ENCODE measurements at regions of chr7 and their contacts with region 1.

Region 1: DNA sequence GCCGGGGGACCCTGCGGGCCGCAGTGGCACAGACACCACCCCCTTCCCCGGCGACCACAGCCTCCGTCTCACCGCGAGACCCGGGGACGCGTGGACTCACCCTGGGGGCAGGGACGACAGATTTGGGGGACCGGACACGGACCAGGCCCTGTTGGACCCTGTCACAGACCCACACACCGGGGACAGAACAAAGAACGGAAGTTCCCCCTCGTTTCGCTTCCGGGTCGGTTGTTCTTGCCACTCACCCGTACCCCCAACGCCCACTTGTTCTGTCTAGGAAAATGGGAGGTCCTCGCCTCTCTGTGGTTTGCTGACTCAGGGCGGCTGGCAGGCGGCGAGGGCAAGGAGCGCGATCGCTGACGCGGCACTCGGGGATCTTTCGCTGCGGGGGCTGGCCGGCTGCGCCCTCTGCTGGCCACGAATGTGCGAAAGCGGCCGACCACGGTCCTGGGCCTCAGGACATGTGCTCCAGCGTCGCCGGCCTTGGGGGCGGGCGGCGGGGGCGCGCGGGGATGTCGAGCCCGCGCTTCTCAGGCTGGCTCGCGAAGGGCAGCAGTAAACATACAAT is at the start of gene ZNF3:
- DNase-seq: peak; percentile 99
- ATAC-seq: peak; percentile 83
- H3K4me3 Mint-ChIP-seq: peak within 1 kb of the TSS; percentile 87
- H3K27ac Mint-ChIP-seq: peak within 1 kb of the TSS; percentile 87
- H3K4me1 Mint-ChIP-seq: peaks cover 25% of the 10 kb centered on the region
- H3K27me3 Mint-ChIP-seq: no peaks in the 10 kb centered on the region
- total RNA-seq, gene ZNF3: 18.8 to 19.0 TPM

Region 2: DNA sequence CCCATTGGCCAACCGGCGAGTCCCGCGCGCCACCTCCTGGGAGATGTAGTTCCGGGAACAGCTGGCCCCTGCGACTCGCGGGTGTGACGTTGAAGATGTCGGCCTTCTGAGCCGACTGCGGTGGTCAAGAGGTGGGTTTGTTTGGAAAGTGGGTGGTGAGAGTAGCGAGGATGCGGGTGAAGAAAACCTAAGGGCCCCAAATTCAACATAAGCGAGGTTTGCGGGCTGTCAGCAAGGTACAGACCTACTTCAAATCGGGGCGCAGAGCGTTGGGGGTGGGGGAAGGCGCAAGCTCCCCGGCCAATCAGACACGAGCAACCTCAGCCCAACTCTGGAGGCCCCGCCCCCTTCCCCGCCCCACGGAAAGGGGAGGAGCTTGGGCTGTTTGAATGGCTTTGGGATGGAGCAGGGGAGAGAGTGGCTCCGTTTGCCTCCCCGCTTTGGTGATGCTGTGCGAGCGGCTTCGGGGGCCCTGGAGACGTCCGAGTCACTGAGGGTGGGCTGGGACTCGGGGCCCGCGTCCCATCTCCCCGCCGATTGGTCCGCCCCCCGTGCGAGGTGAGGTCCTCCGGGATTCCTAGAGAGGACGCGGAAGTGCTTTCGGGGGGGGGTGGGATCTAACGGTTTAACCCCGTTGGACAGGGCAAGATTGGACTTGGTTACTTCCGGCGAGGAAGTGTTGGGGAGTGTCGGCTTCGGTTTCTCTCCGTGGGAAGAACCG is 576.9 kb before region 1 on chr7 and contains the start of gene ZKSCAN5:
- CTCF ChIA-PET with region 1: no interaction called
- POLR2A ChIA-PET with region 1: no interaction called
- intact Hi-C with region 1: loop called in 1 of 2 experiments (anchors 2 kb)
- DNase-seq: peak; percentile 99
- ATAC-seq: peak; percentile 87
- H3K4me3 Mint-ChIP-seq: peak within 1 kb of the TSS; percentile 87
- H3K27ac Mint-ChIP-seq: peak within 1 kb of the TSS; percentile 97
- H3K4me1 Mint-ChIP-seq: peaks cover 25% of the 10 kb centered on the region
- H3K27me3 Mint-ChIP-seq: no peaks in the 10 kb centered on the region
- total RNA-seq, gene ZKSCAN5: 10.1 to 12.1 TPM

Region 3: GRCh38 chr7:99910976-99911375 is 170.6 kb before region 1 on chr7:
- CTCF ChIA-PET with region 1: interaction called, 3 read pairs
- POLR2A ChIA-PET with region 1: no interaction called
- intact Hi-C with region 1: loop called (anchors 1 to 10 kb)
- DNase-seq: no peak
- ATAC-seq: no peak
- H3K4me3 Mint-ChIP-seq: no peak overlapping the region
- H3K27ac Mint-ChIP-seq: peak overlapping the region; percentile 43
- H3K4me1 Mint-ChIP-seq: peaks cover 30% of the 10 kb centered on the region
- H3K27me3 Mint-ChIP-seq: no peaks in the 10 kb centered on the region

Region 4: DNA sequence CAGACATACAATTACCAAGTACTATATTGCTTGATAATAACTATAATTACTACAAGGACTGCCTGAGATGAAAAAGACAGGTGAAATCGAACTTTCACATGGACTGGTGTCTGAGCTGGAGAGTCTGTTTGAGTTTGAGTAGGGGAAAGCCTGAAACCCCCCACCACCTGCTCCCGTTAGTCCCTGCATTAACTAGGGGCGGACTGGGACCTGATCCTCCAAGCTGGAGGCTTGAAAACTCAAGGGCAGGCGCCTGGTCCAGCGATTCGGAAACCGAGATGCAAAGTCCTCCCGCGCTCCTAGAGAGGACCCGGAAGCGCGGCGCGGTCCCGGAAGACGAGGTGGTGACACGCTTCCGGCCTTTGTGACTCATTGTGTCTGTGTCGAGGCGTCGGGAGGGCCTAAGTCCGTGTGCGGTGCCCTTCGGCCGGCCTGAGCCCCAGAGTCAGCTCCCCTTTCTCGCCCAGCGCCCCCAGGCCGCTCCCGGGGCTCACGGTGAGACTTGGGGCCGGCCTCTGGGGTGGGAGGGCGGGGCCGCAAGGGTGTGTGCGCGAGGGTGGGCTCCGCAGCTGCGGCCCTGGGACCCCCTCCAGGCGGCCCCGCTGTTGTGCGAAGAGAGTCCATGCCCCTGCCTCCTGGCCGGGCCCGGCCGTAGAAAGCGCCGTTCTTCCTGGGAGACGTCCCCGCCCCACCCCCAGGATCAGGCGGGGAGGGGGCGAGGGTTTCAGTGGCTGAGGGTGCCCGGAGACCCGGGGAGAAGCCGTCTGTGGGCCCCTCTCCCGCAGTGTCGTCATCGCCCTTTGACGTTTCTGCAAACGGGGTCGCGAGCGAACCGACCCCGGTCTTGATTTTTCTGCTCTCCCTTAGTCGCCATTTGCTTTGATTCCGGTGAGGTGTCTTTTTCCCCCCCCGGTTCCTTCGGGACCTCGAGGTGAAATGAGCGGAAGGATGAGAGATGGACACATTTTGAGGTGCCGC is 66.1 kb before region 1 on chr7 and contains the start of gene ZKSCAN1:
- CTCF ChIA-PET with region 1: interaction called, 5 read pairs
- POLR2A ChIA-PET with region 1: no interaction called
- intact Hi-C with region 1: loop called (anchors 1 to 5 kb)
- DNase-seq: peak; percentile 92
- ATAC-seq: peak; percentile 87
- H3K4me3 Mint-ChIP-seq: peak within 1 kb of the TSS; percentile 94
- H3K27ac Mint-ChIP-seq: peak within 1 kb of the TSS; percentile 96
- H3K4me1 Mint-ChIP-seq: peaks cover 53% of the 10 kb centered on the region
- H3K27me3 Mint-ChIP-seq: no peaks in the 10 kb centered on the region
- total RNA-seq, gene ZKSCAN1: 45.2 to 62.9 TPM

Region 5: GRCh38 chr7:100119062-100119700 is 37.6 kb after region 1 on chr7 and contains the starts of genes CNPY4 and TAF6:
- CTCF ChIA-PET with region 1: interaction called, 6 read pairs
- POLR2A ChIA-PET with region 1: no interaction called
- intact Hi-C with region 1: loop called in 1 of 2 experiments (anchors 1 kb)
- DNase-seq: peak; percentile 97
- ATAC-seq: peak; percentile 68
- H3K4me3 Mint-ChIP-seq: peak within 1 kb of the TSS; percentile 86
- H3K27ac Mint-ChIP-seq: peak within 1 kb of the TSS; percentile 94
- H3K4me1 Mint-ChIP-seq: peaks cover 19% of the 10 kb centered on the region
- H3K27me3 Mint-ChIP-seq: no peaks in the 10 kb centered on the region
- total RNA-seq, gene CNPY4: 11.0 to 14.0 TPM
- total RNA-seq, gene TAF6: 54.3 to 59.5 TPM

Region 6: DNA sequence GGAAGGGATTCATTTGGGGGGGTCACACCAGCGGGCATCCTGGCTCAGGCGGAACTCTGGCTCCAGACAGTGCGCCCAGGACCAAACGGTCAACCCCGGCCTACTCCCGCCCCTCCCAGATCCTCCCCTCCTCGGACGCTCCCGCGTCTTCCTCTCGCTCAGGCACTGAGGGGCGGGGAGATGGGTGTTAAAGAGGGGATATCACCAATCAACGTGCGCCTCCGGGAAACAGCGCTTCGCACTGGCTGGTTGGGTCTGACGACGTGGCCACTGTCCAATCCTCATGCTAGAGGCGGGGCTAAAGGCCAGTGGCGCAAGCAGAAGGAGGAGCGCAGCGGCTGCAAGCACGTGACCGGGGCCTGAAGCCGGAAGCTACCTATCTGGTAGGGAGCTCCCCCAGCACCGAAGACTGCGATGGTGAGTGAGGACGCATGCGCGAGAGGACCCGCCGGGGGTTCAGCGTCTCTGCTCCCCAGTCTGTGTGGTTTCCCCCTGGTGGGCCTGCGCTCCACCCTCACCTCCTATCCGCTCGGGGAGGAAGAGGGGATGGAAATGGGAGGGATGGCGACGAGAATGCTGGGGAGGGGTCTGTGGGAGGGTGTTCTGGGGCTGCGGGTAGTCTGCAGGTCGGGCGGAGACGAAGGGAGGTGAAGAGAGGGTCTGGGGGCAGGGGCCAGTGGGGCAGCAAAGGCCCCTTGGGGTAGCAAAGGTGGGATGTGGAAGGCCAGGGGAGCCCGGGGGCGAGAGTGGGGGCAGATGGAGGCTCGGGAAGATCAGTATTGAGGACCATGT is 67.1 kb after region 1 on chr7 and contains the start of gene LAMTOR4:
- CTCF ChIA-PET with region 1: interaction called, 3 read pairs
- POLR2A ChIA-PET with region 1: interaction called, 11 read pairs
- intact Hi-C with region 1: no loop called
- DNase-seq: peak; percentile 99
- ATAC-seq: peak; percentile 98
- H3K4me3 Mint-ChIP-seq: peak within 1 kb of the TSS; percentile 94
- H3K27ac Mint-ChIP-seq: peak within 1 kb of the TSS; percentile 97
- H3K4me1 Mint-ChIP-seq: peaks cover 29% of the 10 kb centered on the region
- H3K27me3 Mint-ChIP-seq: no peaks in the 10 kb centered on the region
- total RNA-seq, gene LAMTOR4: 69.6 to 120 TPM

Region 7: DNA sequence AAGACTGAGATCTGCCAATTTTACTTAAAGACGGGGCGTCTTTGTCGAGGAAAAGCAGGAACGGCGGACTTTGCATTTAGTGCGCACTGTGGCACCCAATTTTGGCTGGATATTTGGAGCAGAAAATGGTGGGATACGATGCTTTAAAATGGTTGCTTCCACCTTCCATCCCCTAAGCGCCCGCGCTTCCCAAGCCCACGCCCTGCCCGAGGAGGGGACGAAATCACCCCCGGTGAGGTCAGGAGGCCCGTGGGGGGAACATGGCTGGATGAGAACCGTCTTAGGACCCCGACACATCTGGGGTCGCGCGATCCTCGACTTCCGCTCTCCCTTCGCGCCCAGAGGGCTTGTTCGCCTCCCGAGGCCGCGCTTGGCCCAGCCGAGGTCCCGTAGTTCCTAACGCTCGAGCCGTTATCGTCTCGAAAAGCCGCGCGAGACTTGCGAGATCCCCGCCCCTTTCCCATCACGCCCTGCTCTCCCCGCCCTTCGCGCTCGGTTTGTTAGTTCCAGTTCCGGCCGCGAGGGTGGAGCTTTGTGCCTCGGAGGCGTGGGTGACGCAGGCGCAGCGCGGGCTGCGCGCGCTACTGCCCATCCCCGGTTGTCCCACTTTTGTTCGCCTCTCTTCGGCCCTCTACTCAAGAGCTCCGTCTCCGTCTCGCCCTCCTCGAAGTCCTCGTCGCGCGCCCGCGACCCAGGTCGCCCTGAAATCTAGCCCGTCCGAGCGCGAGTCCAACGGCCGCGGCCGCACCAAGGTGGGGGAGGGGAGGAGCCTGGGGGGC is 793.1 kb after region 1 on chr7 and contains the start of gene SRRT:
- CTCF ChIA-PET with region 1: no interaction called
- POLR2A ChIA-PET with region 1: no interaction called
- intact Hi-C with region 1: loop called in 1 of 2 experiments (anchors 10 kb)
- DNase-seq: peak; percentile 99
- ATAC-seq: peak; percentile 95
- H3K4me3 Mint-ChIP-seq: peak within 1 kb of the TSS; percentile 99
- H3K27ac Mint-ChIP-seq: peak within 1 kb of the TSS; percentile 99
- H3K4me1 Mint-ChIP-seq: peaks cover 45% of the 10 kb centered on the region
- H3K27me3 Mint-ChIP-seq: no peaks in the 10 kb centered on the region
- total RNA-seq, gene SRRT: 253 to 260 TPM

Measured in activated CD4-positive, alpha-beta T cell treated with anti-CD3 and anti-CD28 coated beads for 36 hours (primary cell).